Endothelial cell of umbilical vein (primary cell): ENCODE measurements at regions of chr2 and their contacts with region 1.

Region 1: GRCh38 chr2:217277646-217278398 is 418.0 kb upstream of the TNP1 start:
- DNase-seq: peak; percentile 87
- H3K4me3 ChIP-seq: no peak overlapping the region
- H3K27ac ChIP-seq: peak overlapping the region; percentile 72
- H3K4me1 ChIP-seq: peaks cover 20% of the 10 kb centered on the region
- H3K27me3 ChIP-seq: no peaks in the 10 kb centered on the region
- CTCF ChIP-seq: no peak
- POLR2A ChIP-seq: no peak

Region 2: GRCh38 chr2:217160978-217161973 is 116.5 kb before region 1 on chr2:
- CTCF ChIA-PET with region 1: interaction called, 5 read pairs
- POLR2A ChIA-PET with region 1: no interaction called
- dilution Hi-C with region 1: no loop called
- intact Hi-C with region 1: loop called (anchors 1 kb)
- DNase-seq: peak; percentile 93
- H3K4me3 ChIP-seq: no peak overlapping the region
- H3K27ac ChIP-seq: no peak overlapping the region
- H3K4me1 ChIP-seq: peaks cover 7% of the 10 kb centered on the region
- H3K27me3 ChIP-seq: peaks cover 10 to 12% of the 10 kb centered on the region in 2 experiments
- CTCF ChIP-seq: no peak
- POLR2A ChIP-seq: peak; percentile 23

Region 3: DNA sequence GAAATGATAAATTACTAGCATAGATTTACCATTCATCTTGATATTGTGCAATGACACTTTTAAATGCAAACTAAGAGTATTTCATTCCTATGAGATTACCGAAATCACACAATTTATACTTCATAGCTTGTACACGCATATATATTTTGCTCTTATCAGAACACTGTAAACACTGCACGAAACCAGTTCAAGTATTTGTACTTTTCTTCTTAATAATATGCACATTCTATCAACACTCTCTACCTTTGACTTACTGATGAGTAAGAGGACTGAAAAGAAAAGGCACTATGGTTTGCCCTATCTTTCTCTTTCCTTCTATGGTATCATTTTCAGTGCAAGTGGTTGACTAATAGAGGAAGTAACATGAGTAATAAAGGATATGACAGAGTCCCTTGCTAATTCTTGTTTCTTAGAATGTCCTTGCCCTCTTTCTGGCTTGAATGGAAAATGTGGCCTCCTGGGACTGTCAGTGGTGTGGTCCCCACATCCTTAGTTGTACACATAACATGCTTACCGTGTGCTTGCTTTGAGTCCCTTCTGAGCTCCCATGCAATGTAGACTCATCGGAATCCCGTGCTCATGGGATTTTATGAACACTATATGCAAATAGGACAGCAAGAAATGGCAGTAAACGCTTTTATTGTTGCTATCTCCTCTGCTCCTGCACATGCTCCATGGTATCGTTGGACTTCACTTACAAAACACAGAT is 54.4 kb before region 1 on chr2:
- CTCF ChIA-PET with region 1: no interaction called
- POLR2A ChIA-PET with region 1: no interaction called
- dilution Hi-C with region 1: no loop called
- intact Hi-C with region 1: loop called (anchors 1 kb)
- DNase-seq: peak; percentile 90
- H3K4me3 ChIP-seq: no peak overlapping the region
- H3K27ac ChIP-seq: peak overlapping the region; percentile 89
- H3K4me1 ChIP-seq: peaks cover 13% of the 10 kb centered on the region
- H3K27me3 ChIP-seq: no peaks in the 10 kb centered on the region
- CTCF ChIP-seq: no peak
- POLR2A ChIP-seq: no peak

Region 4: GRCh38 chr2:217261452-217261851 is 16.4 kb before region 1 on chr2:
- CTCF ChIA-PET with region 1: no interaction called
- POLR2A ChIA-PET with region 1: no interaction called
- dilution Hi-C with region 1: no loop called
- intact Hi-C with region 1: loop called (anchors 1 kb)
- DNase-seq: peak; percentile 69
- H3K4me3 ChIP-seq: no peak overlapping the region
- H3K27ac ChIP-seq: peak overlapping the region; percentile 50
- H3K4me1 ChIP-seq: peaks cover 5% of the 10 kb centered on the region
- H3K27me3 ChIP-seq: no peaks in the 10 kb centered on the region
- CTCF ChIP-seq: no peak
- POLR2A ChIP-seq: no peak